Mammary epithelial cell (primary cell): ENCODE measurements at regions of chr3 and their contacts with region 1.

Region 1: GRCh38 chr3:101133652-101134051 is 140.4 kb upstream of the ABI3BP start:
- DNase-seq: no peak
- H3K4me3 ChIP-seq: no peak overlapping the region
- H3K27ac ChIP-seq: no peak overlapping the region
- H3K4me1 ChIP-seq: peaks cover 6% of the 10 kb centered on the region
- H3K27me3 ChIP-seq: no peaks in the 10 kb centered on the region
- CTCF ChIP-seq: no peak

Region 2: GRCh38 chr3:101036213-101036618 is 97.4 kb before region 1 on chr3:
- CTCF ChIA-PET with region 1: no interaction called
- dilution Hi-C with region 1: no loop called
- in situ Hi-C with region 1: no loop called
- intact Hi-C with region 1: no loop called
- DNase-seq: peak; percentile 91
- H3K4me3 ChIP-seq: no peak overlapping the region
- H3K27ac ChIP-seq: peak overlapping the region; percentile 82
- H3K4me1 ChIP-seq: peaks cover 31% of the 10 kb centered on the region
- H3K27me3 ChIP-seq: no peaks in the 10 kb centered on the region
- CTCF ChIP-seq: no peak

Region 3: DNA sequence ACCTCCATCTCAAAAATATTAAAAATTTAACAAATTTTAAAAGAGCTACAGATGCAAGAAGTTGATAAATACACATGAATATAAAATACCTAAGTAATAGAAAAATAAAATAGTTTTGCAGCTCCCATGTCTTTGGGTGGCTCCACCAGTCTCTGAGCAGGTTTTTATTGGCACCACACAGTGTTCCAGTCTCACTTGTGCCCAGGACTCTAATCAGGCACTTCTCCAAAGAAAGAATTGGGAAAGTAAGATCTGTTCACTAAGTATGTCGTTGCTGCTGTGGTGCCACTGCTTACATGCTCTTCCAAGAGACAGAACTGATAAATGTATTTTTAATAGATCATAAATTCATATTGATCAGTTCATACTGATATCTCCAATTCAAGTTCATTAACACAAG is 47.9 kb before region 1 on chr3:
- CTCF ChIA-PET with region 1: no interaction called
- dilution Hi-C with region 1: loop called (anchors 5 kb)
- in situ Hi-C with region 1: no loop called
- intact Hi-C with region 1: no loop called
- DNase-seq: no peak
- H3K4me3 ChIP-seq: no peak overlapping the region
- H3K27ac ChIP-seq: no peak overlapping the region
- H3K4me1 ChIP-seq: no peaks in the 10 kb centered on the region
- H3K27me3 ChIP-seq: no peaks in the 10 kb centered on the region
- CTCF ChIP-seq: no peak

Region 4: DNA sequence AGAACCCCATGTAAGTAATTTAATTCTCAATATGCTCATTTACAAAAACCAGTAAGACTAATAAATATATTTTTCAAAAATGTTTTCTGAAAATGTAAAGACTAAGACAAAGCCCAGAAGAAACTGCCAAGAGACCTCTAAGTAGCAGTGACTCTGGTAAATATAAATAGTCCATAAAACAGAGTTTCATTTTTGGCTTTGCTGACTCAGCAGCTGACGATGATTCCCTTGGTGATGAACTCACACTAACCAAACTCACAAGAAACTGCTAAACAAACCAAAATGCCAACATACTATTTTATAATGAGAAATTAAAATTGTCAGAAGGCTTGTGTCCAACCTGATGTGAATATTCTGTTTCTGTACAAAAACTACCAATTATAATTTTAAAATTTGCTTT is 218.2 kb after region 1 on chr3:
- CTCF ChIA-PET with region 1: no interaction called
- dilution Hi-C with region 1: no loop called
- in situ Hi-C with region 1: no loop called
- intact Hi-C with region 1: no loop called
- DNase-seq: no peak
- H3K4me3 ChIP-seq: no peak overlapping the region
- H3K27ac ChIP-seq: no peak overlapping the region
- H3K4me1 ChIP-seq: no peaks in the 10 kb centered on the region
- H3K27me3 ChIP-seq: no peaks in the 10 kb centered on the region
- CTCF ChIP-seq: no peak